Activated naive CD4-positive, alpha-beta T cell treated with anti-CD3 and anti-CD28 coated beads for 36 hours (primary cell): ENCODE measurements at regions of chr11 and their contacts with region 1.

Region 1: DNA sequence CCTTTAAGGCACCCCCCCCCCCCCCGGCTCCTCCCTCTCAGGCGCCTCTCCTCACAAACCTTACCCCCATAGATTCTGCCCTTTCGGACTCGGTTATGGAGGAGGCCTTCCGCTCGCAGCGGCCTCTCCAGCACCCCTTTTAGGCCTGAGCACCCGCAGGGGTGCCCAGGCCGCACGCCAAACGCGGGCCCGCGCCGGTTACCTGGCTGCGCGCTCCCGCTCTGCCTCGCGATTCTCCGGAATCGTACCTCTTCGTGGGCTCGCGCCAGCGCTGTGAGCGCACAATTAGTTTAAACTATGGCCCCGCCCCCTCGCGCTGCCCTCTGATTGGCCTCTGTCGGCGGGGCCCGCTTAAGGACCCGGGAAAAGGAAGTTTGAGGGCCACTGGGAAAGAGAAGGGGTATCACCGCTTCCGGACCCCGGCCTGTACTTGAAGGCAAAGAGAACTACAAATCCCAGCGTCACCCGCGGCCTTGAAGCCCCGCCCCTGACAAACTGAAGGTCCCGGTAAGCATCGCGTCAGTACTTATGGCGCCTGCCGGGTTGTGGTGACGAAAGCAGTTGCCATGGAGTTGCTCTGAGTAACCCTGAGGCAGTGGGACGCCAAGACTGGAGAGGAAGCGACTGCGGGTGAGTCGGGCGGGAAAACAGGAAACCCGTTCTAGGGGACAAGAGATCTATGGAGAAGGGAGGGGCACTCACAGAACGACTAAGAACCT is at the starts of genes LRRC51 and NUMA1:
- DNase-seq: peak; percentile 100
- H3K4me3 Mint-ChIP-seq: peak within 1 kb of the TSS; percentile 88
- H3K27ac Mint-ChIP-seq: peak within 1 kb of the TSS; percentile 90
- H3K4me1 Mint-ChIP-seq: peaks cover 37% of the 10 kb centered on the region
- H3K27me3 Mint-ChIP-seq: no peaks in the 10 kb centered on the region
- total RNA-seq, gene LRRC51: 6.8 to 8.3 TPM
- total RNA-seq, gene NUMA1: 189 to 194 TPM

Region 2: DNA sequence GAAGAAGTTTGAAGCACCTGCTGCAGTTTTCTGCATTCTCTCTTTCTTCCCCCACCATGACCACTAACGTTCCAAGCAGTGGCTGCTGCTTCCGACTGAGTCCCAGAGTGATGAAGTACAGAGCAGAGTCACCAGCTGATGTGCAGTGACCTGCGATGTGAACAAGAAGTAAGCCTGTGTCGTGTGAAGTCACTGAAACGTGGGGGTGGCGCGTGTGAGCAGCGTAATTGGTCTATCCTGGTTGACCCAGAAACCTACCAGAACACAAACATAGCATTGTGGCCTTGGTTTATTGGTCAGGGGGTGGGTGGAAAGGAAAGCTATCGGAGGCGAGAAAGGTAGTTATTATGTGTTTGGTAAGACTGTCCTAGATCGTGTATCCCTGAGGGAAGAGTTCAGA is 549.8 kb before region 1 on chr11:
- CTCF ChIA-PET with region 1: no interaction called
- intact Hi-C with region 1: no loop called
- DNase-seq: no peak
- H3K4me3 Mint-ChIP-seq: no peak overlapping the region
- H3K27ac Mint-ChIP-seq: no peak overlapping the region
- H3K4me1 Mint-ChIP-seq: no peaks in the 10 kb centered on the region
- H3K27me3 Mint-ChIP-seq: peaks cover 6% of the 10 kb centered on the region

Region 3: GRCh38 chr11:71787098-71787823 is 293.2 kb before region 1 on chr11:
- CTCF ChIA-PET with region 1: no interaction called
- intact Hi-C with region 1: loop called (anchors 1 kb)
- DNase-seq: peak; percentile 97
- H3K4me3 Mint-ChIP-seq: peak overlapping the region; percentile 95
- H3K27ac Mint-ChIP-seq: peak overlapping the region; percentile 96
- H3K4me1 Mint-ChIP-seq: peaks cover 22% of the 10 kb centered on the region
- H3K27me3 Mint-ChIP-seq: no peaks in the 10 kb centered on the region

Region 4: DNA sequence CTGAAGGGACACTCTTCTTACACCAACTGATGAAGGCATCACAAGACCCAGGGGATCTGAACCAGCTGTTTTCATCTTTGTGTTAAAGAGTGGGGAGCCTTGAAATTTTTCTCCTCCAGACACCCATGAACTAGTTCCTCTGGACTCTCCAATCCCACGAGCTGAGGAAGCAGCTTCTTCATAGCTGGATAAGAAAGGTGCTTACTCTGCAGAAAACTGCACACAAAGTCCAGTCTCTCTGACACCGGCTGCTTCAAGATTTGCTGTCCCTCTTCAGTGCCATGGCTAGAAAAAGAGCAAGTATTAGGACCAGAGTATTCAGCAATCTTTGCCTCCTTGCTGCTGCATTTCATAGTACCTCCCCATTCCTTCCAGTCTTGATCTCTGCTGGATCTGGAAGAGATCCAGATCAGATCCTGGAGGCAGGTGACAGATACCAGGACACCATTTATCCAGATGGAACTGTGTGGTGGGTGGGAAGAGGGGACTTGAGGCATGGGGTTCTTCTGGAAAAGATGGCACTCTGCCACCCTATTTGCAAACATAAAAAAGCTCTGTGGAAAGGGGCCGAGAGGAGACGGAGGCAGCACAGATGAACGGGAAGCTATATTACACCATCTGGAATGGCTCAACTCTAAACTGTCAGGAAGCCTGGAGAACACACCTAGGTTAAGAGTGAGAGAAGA is 56.2 kb before region 1 on chr11:
- CTCF ChIA-PET with region 1: interaction called, 36 read pairs
- intact Hi-C with region 1: loop called (anchors 2 kb)
- DNase-seq: no peak
- H3K4me3 Mint-ChIP-seq: no peak overlapping the region
- H3K27ac Mint-ChIP-seq: peak overlapping the region; percentile 84
- H3K4me1 Mint-ChIP-seq: peaks cover 31% of the 10 kb centered on the region
- H3K27me3 Mint-ChIP-seq: no peaks in the 10 kb centered on the region

Region 5: DNA sequence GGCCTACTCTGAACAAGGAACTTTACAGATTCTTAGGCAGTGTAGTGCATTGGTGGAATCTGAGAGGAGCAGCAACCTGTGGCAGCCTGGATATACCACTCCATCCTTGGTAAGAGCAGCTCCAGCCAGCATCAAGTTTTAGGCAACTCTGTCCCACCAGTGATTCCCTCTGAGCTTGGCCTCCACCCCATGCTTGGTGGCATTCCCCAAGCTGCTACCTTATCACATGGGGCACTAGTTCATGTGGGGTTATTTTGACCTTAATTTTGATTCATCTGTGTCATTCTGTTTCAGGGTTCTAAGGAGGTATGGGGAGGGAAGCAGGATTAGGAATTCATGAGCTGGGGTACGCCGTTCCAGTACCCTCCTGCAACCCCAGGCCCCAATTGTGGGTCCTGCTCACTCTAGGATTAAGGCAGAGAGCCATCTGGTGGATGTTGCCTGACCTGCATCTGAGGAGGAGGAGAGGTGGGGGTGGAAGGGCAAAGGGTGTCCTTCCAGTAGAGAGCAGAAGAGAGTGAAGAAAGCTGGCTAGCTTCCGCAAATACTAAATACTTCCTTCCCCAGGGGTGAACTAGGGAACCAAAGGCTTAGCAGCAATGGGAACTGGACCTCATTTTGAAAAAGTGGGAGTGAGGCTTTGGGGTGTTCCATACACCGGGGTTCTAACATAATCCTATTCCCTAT is 10.7 kb after region 1 on chr11:
- CTCF ChIA-PET with region 1: interaction called, 22 read pairs
- intact Hi-C with region 1: no loop called
- DNase-seq: peak; percentile 83
- H3K4me3 Mint-ChIP-seq: no peak overlapping the region
- H3K27ac Mint-ChIP-seq: no peak overlapping the region
- H3K4me1 Mint-ChIP-seq: peaks cover 14% of the 10 kb centered on the region
- H3K27me3 Mint-ChIP-seq: no peaks in the 10 kb centered on the region

Region 6: GRCh38 chr11:72112321-72113219 is 32.2 kb after region 1 on chr11 and contains the start of gene ANAPC15:
- CTCF ChIA-PET with region 1: no interaction called
- intact Hi-C with region 1: loop called (anchors 1 kb)
- DNase-seq: peak; percentile 100
- H3K4me3 Mint-ChIP-seq: peak within 1 kb of the TSS; percentile 85
- H3K27ac Mint-ChIP-seq: peak within 1 kb of the TSS; percentile 97
- H3K4me1 Mint-ChIP-seq: peaks cover 12% of the 10 kb centered on the region
- H3K27me3 Mint-ChIP-seq: no peaks in the 10 kb centered on the region
- total RNA-seq, gene ANAPC15: 69.1 to 70.3 TPM

Region 7: DNA sequence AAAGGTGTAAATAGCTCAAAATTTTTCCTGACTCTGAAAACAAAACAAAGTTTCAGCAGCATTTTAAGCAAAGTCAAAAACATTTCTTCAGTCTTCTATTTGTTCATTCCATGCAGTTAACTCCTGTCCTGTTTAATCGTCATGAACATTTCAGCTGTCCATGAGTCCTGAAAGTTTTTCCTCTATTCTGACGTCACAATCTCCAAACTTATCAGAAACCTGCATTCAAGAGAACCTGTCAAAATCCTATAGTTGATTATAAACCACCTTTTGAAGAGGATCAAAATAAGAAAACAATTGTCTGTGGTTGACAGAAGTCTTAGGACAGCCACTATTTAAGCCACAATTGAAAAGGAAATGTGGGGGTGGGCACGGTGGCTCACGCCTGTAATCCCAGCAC is 70.5 kb after region 1 on chr11:
- CTCF ChIA-PET with region 1: no interaction called
- intact Hi-C with region 1: no loop called
- DNase-seq: no peak
- H3K4me3 Mint-ChIP-seq: no peak overlapping the region
- H3K27ac Mint-ChIP-seq: no peak overlapping the region
- H3K4me1 Mint-ChIP-seq: no peaks in the 10 kb centered on the region
- H3K27me3 Mint-ChIP-seq: peaks cover 2% of the 10 kb centered on the region

Region 8: GRCh38 chr11:72373163-72373562 is 292.7 kb after region 1 on chr11:
- CTCF ChIA-PET with region 1: no interaction called
- intact Hi-C with region 1: no loop called
- DNase-seq: no peak
- H3K4me3 Mint-ChIP-seq: no peak overlapping the region
- H3K27ac Mint-ChIP-seq: no peak overlapping the region
- H3K4me1 Mint-ChIP-seq: no peaks in the 10 kb centered on the region
- H3K27me3 Mint-ChIP-seq: no peaks in the 10 kb centered on the region

Region 9: DNA sequence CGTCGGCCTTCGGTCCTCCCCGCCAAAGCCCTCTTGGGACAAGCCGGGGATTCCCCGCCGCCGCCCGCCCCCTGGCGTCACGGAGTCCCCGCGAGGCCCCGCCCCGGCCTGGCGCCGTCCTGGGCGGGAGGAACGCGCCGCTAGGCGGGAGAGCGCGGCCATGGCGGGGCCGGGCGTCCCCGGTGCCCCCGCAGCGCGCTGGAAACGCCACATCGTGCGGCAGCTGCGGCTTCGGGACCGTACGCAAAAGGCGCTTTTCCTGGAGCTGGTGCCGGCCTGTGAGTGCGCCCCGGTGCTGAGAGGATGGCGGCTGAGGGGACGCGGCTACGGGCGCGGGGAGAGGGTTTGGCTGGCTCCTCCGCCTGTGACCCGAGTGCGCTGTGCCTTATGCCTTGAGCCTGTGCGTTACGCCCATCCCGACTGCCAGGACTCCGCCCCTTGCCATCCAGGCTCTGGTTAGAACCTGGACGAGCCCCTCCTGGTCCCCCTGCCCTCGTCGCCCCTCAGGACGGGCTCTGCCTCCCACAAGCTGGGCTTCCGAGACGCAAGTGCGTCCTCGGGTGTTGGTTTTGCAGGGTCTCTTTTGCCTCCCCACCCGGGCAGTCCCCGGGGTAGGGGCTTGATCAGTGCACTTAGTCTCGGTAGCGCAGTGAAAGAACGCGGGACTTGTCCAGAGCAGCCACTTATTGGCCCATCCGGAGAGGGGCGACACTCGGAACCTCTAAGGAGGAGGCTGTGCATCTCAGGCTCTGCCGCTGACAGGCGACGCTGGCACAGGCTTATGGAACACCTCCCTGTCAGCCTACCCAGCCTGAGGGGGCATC is 734.1 kb after region 1 on chr11 and contains the start of gene ATG16L2:
- CTCF ChIA-PET with region 1: no interaction called
- intact Hi-C with region 1: loop called (anchors 10 kb)
- DNase-seq: peak; percentile 89
- H3K4me3 Mint-ChIP-seq: peak within 1 kb of the TSS; percentile 100
- H3K27ac Mint-ChIP-seq: peak within 1 kb of the TSS; percentile 97
- H3K4me1 Mint-ChIP-seq: peaks cover 34% of the 10 kb centered on the region
- H3K27me3 Mint-ChIP-seq: no peaks in the 10 kb centered on the region
- total RNA-seq, gene ATG16L2: 105 to 114 TPM